CD4-positive, alpha-beta T cell (primary cell): ENCODE measurements at regions of chr11 and their contacts with region 1.

Region 1: GRCh38 chr11:59810189-59810910 is at the start of gene MRPL16:
- DNase-seq: peak; percentile 84 to 95 (median 88)
- ATAC-seq: peak; percentile 99
- H3K4me3 ChIP-seq: peak within 1 kb of the TSS; percentile 93
- H3K4me3 Mint-ChIP-seq: peak within 1 kb of the TSS; percentile 95
- H3K27ac ChIP-seq: peak within 1 kb of the TSS; percentile 53 to 65
- H3K27ac Mint-ChIP-seq: peak within 1 kb of the TSS; percentile 93
- H3K4me1 ChIP-seq: peaks cover 25% of the 10 kb centered on the region
- H3K4me1 Mint-ChIP-seq: peaks cover 33% of the 10 kb centered on the region
- H3K27me3 ChIP-seq: no peaks in the 10 kb centered on the region
- H3K27me3 Mint-ChIP-seq: peaks cover 3% of the 10 kb centered on the region
- CTCF ChIP-seq: peak; percentile 12
- total RNA-seq, gene MRPL16: 22.8 to 24.6 TPM

Region 2: DNA sequence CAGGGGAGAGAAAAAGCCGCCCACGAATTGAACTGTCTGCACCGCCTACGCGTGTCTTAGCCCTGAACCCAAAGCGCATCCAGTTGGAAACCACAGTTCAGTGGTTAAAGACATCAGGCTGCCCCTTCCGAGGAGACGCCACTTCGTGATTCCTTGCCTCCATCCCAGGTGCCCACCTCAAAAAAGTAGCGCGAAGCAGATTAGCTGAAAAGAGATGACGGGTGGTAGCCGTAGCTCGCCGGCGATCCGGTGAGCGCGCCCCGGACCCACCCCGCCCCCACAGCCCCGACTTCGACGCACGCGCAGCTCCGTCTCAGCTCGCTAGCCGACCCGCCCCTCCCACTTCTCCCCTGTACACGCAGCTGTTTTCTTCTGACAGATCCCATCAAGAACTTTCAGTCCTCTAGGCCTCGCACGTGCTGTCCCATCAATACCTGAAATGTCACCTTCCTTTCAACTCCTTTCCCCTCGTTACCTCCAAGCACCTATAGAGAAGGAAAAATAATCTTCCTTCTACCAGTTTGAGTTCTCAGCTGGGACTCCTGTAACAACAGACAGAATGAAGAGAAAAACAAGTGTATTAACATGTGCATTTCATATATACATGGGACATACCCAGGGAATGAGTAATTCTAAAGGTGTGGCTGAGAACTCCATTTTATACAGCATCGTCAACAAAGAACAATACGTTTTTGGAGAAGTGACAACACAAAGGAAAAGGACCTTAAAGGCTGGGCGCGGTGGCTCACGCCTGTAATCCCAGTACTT is 249.5 kb before region 1 on chr11:
- CTCF ChIA-PET with region 1: no interaction called
- POLR2A ChIA-PET with region 1: no interaction called
- intact Hi-C with region 1: loop called (anchors 5 to 10 kb)
- DNase-seq: peak; percentile 70 to 92 (median 80)
- ATAC-seq: peak; percentile 71
- H3K4me3 ChIP-seq: peak overlapping the region; percentile 92
- H3K4me3 Mint-ChIP-seq: peak overlapping the region; percentile 97
- H3K27ac ChIP-seq: peak overlapping the region; percentile 71 to 73
- H3K27ac Mint-ChIP-seq: peak overlapping the region; percentile 92
- H3K4me1 ChIP-seq: peaks cover 45% of the 10 kb centered on the region
- H3K4me1 Mint-ChIP-seq: peaks cover 50% of the 10 kb centered on the region
- H3K27me3 ChIP-seq: no peaks in the 10 kb centered on the region
- H3K27me3 Mint-ChIP-seq: peaks cover 10% of the 10 kb centered on the region
- CTCF ChIP-seq: no peak

Region 3: DNA sequence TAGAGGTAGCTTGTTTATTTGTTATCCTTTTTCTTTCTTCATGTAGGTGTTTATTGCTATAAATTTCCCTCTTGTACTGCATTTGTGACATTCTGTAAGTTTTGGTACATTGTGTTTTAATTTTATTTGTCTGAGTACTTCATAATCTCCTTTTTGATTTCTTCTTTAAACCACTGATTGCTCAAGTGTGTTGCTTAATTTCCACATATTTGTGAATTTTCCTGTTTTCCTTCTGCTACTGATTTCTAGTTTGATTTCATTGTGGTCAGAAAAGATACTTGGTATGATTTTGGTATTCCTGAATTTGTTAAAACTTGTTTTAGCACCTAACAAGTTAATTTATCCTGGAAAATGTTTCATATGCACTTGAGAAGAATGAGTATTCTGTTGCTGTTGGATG is 111.8 kb before region 1 on chr11:
- CTCF ChIA-PET with region 1: no interaction called
- POLR2A ChIA-PET with region 1: no interaction called
- intact Hi-C with region 1: loop called in 1 of 2 experiments (anchors 10 kb)
- DNase-seq: no peak
- ATAC-seq: no peak
- H3K4me3 ChIP-seq: no peak overlapping the region
- H3K4me3 Mint-ChIP-seq: no peak overlapping the region
- H3K27ac ChIP-seq: no peak overlapping the region
- H3K27ac Mint-ChIP-seq: no peak overlapping the region
- H3K4me1 ChIP-seq: no peaks in the 10 kb centered on the region
- H3K4me1 Mint-ChIP-seq: no peaks in the 10 kb centered on the region
- H3K27me3 ChIP-seq: no peaks in the 10 kb centered on the region
- H3K27me3 Mint-ChIP-seq: peaks cover 25% of the 10 kb centered on the region
- CTCF ChIP-seq: no peak

Region 4: GRCh38 chr11:59719556-59719955 is 90.8 kb before region 1 on chr11:
- CTCF ChIA-PET with region 1: no interaction called
- POLR2A ChIA-PET with region 1: no interaction called
- intact Hi-C with region 1: no loop called
- DNase-seq: no peak
- ATAC-seq: no peak
- H3K4me3 ChIP-seq: no peak overlapping the region
- H3K4me3 Mint-ChIP-seq: no peak overlapping the region
- H3K27ac ChIP-seq: no peak overlapping the region
- H3K27ac Mint-ChIP-seq: no peak overlapping the region
- H3K4me1 ChIP-seq: no peaks in the 10 kb centered on the region
- H3K4me1 Mint-ChIP-seq: no peaks in the 10 kb centered on the region
- H3K27me3 ChIP-seq: peaks cover 3 to 7% of the 10 kb centered on the region in 2 experiments
- H3K27me3 Mint-ChIP-seq: peaks cover 63% of the 10 kb centered on the region
- CTCF ChIP-seq: no peak